ENCODE measurements at regions of chr5 and their contacts with region 1.

Region 1: DNA sequence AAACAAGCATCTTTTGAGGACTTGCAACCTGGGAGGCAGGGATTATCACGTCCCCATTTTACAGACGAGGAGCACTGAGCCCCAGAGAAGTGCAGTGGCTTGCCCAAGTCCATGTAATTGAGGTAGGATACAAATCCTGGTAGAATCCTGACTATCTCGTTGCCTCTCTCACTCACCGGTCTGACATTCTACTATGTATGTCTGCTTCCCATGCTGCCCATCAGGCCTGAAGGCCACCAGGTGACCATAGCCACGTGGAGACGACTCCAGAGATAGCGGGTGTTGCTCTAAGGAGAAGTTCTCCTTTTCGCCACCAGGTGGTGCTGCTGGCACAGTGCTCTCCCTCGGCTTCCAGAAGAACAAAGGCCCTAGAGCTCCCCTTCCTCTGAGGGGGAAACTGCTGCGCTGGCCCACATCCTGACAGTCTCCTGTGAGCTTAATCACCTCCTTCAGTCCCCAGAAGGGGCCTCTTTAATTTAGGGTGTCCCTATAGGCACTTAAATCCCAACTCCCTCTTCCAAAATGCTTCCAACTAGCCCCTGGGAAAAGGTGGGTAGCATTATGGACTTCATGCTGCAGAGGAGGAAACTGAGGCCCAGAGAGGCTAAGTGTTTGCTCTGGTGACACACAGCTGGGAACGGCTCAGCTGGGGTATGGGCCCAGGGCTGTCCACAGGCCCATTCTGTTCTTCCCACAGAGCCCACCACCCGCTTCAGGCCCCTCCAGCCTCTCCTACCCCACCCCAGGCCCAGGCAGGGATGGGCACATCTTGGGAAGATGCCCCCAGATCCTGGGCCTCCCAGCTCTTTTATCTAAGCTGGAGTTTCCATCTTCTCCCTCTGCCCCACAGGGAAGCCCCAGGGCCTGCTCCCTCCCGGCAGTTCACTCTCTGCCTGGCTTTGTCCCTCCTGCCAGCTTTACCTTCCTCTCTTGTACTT is 6.4 kb downstream of the SLC34A1 start:
- DNase-seq: peak; percentile 91
- H3K4me3 Mint-ChIP-seq: peak overlapping the region; percentile 49
- H3K27ac Mint-ChIP-seq: peak overlapping the region; percentile 76
- H3K4me1 Mint-ChIP-seq: peaks cover 33% of the 10 kb centered on the region
- H3K27me3 Mint-ChIP-seq: no peaks in the 10 kb centered on the region
- CTCF ChIP-seq: peak; percentile 99

Region 2: DNA sequence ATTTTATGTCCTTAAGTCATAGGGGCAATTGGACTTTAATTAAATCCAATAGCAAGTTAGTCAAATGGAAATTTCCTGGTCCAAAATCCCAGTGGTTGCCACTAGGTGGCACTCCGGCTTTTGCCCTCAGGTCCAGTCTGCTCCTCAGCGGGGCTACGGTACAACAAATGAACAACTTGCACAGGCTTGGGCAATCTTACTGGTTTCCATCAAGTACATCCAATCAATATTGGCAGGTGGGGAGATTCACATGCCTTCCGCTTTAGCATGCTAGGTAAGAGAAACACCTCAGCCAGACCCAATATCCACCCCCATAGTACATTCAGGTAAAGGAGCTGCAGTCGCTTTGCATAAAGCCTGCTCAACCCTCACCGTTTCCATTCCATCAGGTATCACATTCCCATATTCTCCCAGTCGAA is 72.7 kb before region 1 on chr5:
- CTCF ChIA-PET with region 1: interaction called, 18 read pairs
- POLR2A ChIA-PET with region 1: interaction called, 3 read pairs
- intact Hi-C with region 1: loop called (anchors 1 kb)
- DNase-seq: peak; percentile 85
- H3K4me3 Mint-ChIP-seq: no peak overlapping the region
- H3K27ac Mint-ChIP-seq: no peak overlapping the region
- H3K4me1 Mint-ChIP-seq: no peaks in the 10 kb centered on the region
- H3K27me3 Mint-ChIP-seq: no peaks in the 10 kb centered on the region
- CTCF ChIP-seq: peak; percentile 92

Region 3: DNA sequence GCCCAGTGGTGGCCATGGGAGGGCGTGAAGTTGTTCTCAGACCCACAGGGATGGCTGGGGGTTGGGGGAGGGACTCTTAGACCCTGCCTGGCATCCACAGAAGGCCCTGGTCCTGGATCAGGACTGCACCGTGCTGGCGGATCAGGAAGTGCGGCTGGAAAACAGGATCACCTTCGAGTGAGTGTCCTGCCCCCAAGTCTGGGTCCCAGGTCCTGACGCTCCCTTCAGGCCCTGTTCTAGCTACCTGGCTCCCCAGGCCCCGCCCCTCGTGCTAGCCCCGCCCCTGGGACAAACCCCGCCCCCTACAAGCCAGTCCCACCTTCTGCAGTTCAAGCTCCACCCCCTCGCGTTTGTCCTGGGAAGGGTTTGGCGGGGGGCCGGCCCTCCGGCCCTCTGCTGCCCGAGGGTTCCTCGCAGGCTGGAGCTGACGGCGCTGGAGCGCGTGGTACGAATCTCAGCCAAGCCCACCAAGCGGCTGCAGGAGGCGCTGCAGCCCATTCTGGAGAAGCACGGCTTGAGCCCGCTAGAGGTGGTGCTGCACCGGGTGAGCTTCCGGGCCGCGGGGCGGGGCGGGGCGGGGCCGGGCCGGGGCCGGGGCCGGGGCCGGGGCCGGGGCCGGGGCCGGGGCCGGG is 20.0 kb before region 1 on chr5:
- CTCF ChIA-PET with region 1: interaction called, 107 read pairs
- POLR2A ChIA-PET with region 1: interaction called, 59 read pairs
- intact Hi-C with region 1: no loop called
- DNase-seq: peak; percentile 96
- H3K4me3 Mint-ChIP-seq: peak overlapping the region; percentile 76
- H3K27ac Mint-ChIP-seq: no peak overlapping the region
- H3K4me1 Mint-ChIP-seq: peaks cover 24% of the 10 kb centered on the region
- H3K27me3 Mint-ChIP-seq: no peaks in the 10 kb centered on the region
- CTCF ChIP-seq: peak; percentile 60

Region 4: DNA sequence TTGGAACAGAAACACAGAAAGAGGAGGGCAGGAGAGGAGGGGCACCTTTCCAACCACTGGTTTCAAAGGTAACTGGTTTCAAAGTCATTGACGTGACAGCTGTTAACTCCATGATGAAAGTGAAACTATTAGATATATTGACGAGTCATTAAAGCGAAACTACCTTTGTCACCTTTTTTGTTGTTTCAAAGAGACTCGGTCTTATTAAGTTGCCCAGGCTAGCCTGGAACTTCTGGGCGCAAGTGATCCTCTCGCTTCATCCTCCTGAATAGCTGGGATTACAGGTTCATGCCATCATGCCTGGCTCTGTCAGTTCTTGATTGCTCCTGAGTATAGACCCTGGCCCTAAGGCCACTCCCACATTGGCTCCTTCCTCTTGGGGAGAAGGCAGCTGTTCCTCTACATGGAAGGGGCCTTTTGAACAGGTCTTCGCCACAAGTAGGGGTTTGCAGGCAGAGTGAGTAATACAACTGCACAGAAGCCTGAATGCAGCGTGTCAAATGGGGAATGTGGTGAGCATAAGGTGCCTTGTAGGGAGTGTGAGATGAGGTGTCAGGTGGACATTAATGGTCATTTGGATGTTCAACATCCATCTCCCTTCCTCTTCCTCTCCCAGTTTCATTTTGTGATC is 22.1 kb after region 1 on chr5:
- CTCF ChIA-PET with region 1: interaction called, 10 read pairs
- POLR2A ChIA-PET with region 1: interaction called, 4 read pairs
- intact Hi-C with region 1: no loop called
- DNase-seq: no peak
- H3K4me3 Mint-ChIP-seq: no peak overlapping the region
- H3K27ac Mint-ChIP-seq: no peak overlapping the region
- H3K4me1 Mint-ChIP-seq: no peaks in the 10 kb centered on the region
- H3K27me3 Mint-ChIP-seq: no peaks in the 10 kb centered on the region
- CTCF ChIP-seq: no peak

Region 5: DNA sequence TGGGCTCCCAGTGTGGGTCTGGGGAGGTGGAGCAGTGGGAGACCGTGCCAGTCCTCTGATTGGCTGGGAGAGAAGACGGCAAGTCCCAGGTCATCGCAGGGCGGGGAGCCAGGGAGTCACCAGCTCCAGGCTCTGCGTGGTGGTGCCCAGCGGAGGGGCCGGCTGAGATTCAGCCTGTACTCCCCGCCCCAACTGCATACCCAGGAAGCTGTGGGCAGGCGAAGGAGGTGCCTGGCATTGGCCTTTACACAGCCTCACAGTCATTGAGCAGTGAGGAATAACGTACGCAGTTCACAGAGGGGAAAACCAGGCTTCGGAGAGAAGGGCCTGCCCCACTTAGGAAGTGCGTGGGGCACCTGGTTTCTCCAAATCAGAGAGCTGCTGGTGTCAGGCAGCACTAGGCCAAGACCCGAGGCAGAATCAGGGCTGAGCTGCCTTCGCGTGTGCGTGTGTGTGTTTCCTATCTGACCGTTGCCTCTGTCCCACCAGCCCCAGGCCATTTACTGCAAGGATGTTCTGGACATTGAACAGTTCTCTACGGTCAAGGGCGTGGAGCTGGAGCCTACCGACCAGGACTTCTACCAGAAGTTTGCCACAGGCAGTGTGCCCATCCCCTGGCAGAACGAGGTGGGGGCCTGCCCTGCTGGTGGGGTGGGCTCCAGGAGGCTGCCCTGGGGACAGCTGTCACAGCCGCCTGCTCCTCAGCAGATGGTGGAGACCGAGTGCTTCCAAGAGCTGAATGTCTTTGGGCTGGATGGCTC is 49.8 kb after region 1 on chr5:
- CTCF ChIA-PET with region 1: interaction called, 25 read pairs
- POLR2A ChIA-PET with region 1: no interaction called
- intact Hi-C with region 1: no loop called
- DNase-seq: no peak
- H3K4me3 Mint-ChIP-seq: no peak overlapping the region
- H3K27ac Mint-ChIP-seq: no peak overlapping the region
- H3K4me1 Mint-ChIP-seq: peaks cover 17% of the 10 kb centered on the region
- H3K27me3 Mint-ChIP-seq: no peaks in the 10 kb centered on the region
- CTCF ChIP-seq: no peak

Region 6: GRCh38 chr5:177454397-177455035 is 63.9 kb after region 1 on chr5:
- CTCF ChIA-PET with region 1: interaction called, 209 read pairs
- POLR2A ChIA-PET with region 1: interaction called, 90 read pairs
- intact Hi-C with region 1: loop called (anchors 1 kb)
- DNase-seq: peak; percentile 93
- H3K4me3 Mint-ChIP-seq: peak overlapping the region; percentile 70
- H3K27ac Mint-ChIP-seq: no peak overlapping the region
- H3K4me1 Mint-ChIP-seq: peaks cover 6% of the 10 kb centered on the region
- H3K27me3 Mint-ChIP-seq: no peaks in the 10 kb centered on the region
- CTCF ChIP-seq: peak; percentile 98

Region 7: DNA sequence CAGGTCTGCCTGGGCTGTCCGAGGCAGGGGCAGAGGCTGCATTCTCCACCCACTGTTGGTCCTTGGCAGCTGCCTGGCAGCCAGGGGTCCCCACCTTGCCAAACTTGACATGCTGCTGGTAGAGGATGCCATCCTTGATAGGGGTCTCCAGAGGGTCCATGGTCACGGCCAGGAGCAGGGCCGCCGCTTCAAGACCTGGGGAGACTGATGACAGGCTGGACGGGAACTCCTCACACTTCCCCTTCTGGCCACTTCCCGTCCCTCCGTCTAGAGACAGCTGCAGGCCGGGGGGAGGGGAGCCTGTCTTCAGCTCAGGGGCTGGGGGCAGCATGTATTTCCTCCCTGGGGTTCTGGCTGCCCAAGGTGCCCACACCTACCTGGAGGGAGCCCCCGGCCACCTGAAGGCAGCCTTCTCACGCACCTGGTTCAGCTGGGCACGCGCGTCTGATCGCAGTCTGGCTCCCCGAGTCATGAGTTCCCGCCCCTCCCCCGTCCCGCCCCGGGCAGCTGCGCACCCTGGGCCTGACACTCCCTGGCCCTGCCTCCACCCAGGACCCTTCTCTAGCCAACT is 118.8 kb after region 1 on chr5 and contains the start of gene DOK3:
- CTCF ChIA-PET with region 1: interaction called, 12 read pairs
- POLR2A ChIA-PET with region 1: no interaction called
- intact Hi-C with region 1: no loop called
- DNase-seq: no peak
- H3K4me3 Mint-ChIP-seq: no peak within 1 kb of the TSS
- H3K27ac Mint-ChIP-seq: no peak within 1 kb of the TSS
- H3K4me1 Mint-ChIP-seq: peaks cover 8% of the 10 kb centered on the region
- H3K27me3 Mint-ChIP-seq: no peaks in the 10 kb centered on the region
- CTCF ChIP-seq: no peak
- total RNA-seq, gene DOK3: 5.4 and 6.0 TPM in 2 replicates